PC-9 (cell line): ENCODE measurements at regions of chr19 and their contacts with region 1.

Region 1: GRCh38 chr19:42295831-42296525 is 6.0 kb upstream of the PRR19 start:
- DNase-seq: peak; percentile 58 to 86
- H3K4me3 ChIP-seq: no peak overlapping the region
- H3K27ac ChIP-seq: no peak overlapping the region
- H3K4me1 ChIP-seq: no peaks in the 10 kb centered on the region
- H3K27me3 ChIP-seq: no peaks in the 10 kb centered on the region
- CTCF ChIP-seq: peak; percentile 95

Region 2: GRCh38 chr19:42140125-42140754 is 155.7 kb before region 1 on chr19:
- CTCF ChIA-PET with region 1: no interaction called
- POLR2A ChIA-PET with region 1: no interaction called
- intact Hi-C with region 1: no loop called
- DNase-seq: peak in 1 of 2 experiments; percentile 56
- H3K4me3 ChIP-seq: no peak overlapping the region
- H3K27ac ChIP-seq: no peak overlapping the region
- H3K4me1 ChIP-seq: no peaks in the 10 kb centered on the region
- H3K27me3 ChIP-seq: peaks cover 13% of the 10 kb centered on the region
- CTCF ChIP-seq: no peak

Region 3: DNA sequence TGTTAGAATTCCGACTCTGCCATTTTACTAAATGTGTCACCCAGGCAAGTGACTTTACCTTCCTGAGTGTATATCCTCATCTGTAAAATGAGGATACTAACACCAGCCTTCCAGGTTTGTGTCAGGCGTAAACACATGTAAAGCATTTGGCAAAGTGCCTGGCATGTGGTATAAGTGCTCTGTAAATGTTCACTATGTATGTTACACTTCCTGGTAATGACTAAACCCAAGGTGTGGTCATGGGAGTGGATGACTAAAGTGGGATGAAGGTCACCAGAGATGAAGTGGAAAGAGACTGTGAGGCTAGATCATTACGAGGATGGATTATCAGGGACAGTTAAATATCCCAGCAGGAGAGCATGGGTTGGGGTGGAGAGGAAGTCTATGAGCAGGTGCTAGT is 104.1 kb before region 1 on chr19:
- CTCF ChIA-PET with region 1: interaction called, 11 read pairs
- POLR2A ChIA-PET with region 1: no interaction called
- intact Hi-C with region 1: no loop called
- DNase-seq: peak; percentile 67 to 98
- H3K4me3 ChIP-seq: no peak overlapping the region
- H3K27ac ChIP-seq: peak overlapping the region; percentile 94
- H3K4me1 ChIP-seq: peaks cover 34% of the 10 kb centered on the region
- H3K27me3 ChIP-seq: no peaks in the 10 kb centered on the region
- CTCF ChIP-seq: no peak

Region 4: DNA sequence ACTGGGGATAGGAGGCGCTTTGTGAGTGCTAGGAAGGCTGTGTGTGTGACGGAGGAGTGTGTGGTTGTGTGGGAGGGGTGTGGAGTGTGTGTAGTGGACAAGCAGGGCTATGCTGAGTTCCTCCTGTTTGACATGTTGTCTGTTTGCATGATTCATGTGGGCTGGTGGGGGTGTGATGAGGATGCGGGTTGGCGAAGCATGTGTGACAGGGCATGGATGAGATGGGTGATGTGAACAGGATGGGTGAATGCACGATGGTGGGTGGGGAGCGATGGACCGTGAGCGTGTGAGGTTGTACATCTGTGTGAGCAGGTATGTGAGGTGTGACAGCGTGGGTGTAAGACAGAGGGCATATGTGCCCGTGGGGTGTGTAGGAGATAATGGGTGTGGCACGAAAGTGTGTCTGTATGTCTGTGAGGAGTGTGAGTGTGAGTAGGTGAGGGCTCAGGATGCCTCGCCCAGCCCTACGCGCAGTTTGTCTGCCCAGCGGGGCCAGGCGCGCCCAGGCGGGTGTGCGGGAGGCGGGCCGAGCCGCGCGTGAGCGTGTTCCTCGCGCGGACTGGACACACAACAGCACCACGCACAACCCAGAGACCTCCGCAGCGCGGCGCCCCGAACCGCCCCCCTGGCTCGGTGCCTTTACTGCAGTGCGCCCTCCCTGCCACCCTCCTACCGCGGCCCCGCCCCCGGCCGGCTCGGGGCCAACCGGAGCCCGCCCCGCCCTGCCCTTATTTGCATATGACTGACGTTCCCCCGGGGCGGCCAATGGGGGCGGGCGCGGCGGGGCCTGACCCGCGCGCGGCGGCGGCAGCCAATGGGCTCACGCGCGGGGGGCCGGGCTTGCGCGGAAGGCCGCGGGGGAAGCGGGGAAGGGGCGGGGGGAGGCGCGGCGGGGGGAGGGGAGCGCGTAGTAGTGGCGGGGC is 12.6 kb before region 1 on chr19:
- CTCF ChIA-PET with region 1: interaction called, 12 read pairs
- POLR2A ChIA-PET with region 1: no interaction called
- intact Hi-C with region 1: no loop called
- DNase-seq: peak; percentile 71 to 94
- H3K4me3 ChIP-seq: peak overlapping the region; percentile 66
- H3K27ac ChIP-seq: no peak overlapping the region
- H3K4me1 ChIP-seq: peaks cover 42% of the 10 kb centered on the region
- H3K27me3 ChIP-seq: no peaks in the 10 kb centered on the region
- CTCF ChIP-seq: no peak